ENCODE measurements at regions of chrX and their contacts with region 1.

Region 1: GRCh38 chrX:46796574-46797191 is 37.8 kb upstream of the SLC9A7 start:
- DNase-seq: peak; percentile 52
- ATAC-seq: peak; percentile 85
- H3K4me3 ChIP-seq: no peak overlapping the region
- H3K27ac ChIP-seq: no peak overlapping the region; the same call in 1 of the 2 replicates
- H3K4me1 ChIP-seq: peaks cover 11% of the 10 kb centered on the region
- H3K27me3 ChIP-seq: no peaks in the 10 kb centered on the region
- CTCF ChIP-seq: peak; percentile 90

Region 2: GRCh38 chrX:46758906-46759644 is 37.6 kb before region 1 on chrX and contains the start of gene SLC9A7:
- CTCF ChIA-PET with region 1: interaction called, 5 read pairs
- POLR2A ChIA-PET with region 1: no interaction called
- in situ Hi-C with region 1: no loop called
- intact Hi-C with region 1: loop called (anchors 1 kb)
- DNase-seq: peak; percentile 43
- ATAC-seq: peak; percentile 93
- H3K4me3 ChIP-seq: peak within 1 kb of the TSS; percentile 65 to 90
- H3K27ac ChIP-seq: peak within 1 kb of the TSS; percentile 83
- H3K4me1 ChIP-seq: peaks cover 15% of the 10 kb centered on the region
- H3K27me3 ChIP-seq: no peaks in the 10 kb centered on the region
- CTCF ChIP-seq: peak; percentile 93
- total RNA-seq, gene SLC9A7: 80.4 TPM

Measured in Panc1 (cell line).